Naive thymus-derived CD4-positive, alpha-beta T cell (primary cell): ENCODE measurements at regions of chr20 and their contacts with region 1.

Region 1: DNA sequence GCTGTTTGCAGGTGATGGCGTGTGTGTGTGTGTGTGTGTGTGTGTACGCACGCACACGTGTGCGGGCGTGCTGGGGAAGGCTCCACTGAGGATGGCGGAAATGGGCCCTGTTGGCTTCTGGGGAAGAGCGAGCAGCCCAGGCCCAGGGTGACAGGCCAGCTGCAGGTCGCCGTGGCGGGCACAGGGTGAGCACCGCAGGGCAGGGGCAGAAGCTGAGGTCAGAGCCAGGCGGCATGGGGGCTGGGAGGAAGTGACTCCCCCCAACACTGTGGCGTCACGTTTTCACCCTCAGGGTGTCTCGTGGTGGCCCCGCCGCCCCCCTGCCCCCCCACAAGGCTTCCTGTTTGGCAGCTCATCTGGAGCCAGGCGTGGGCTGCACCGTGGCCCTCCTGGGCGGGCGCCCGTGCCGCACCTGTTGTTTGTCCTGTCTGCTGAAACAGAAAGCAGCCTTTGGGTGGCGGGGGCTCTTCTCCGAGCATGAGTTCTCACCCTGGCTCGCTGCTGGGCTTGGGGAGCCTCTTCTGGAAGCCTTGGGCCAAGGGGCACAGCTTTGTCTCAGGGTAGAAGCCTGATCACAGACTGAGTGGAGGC is 7.1 kb downstream of the RBM38 start:
- DNase-seq: peak; percentile 67 to 94 (median 93)
- ATAC-seq: peak; percentile 87
- H3K4me3 ChIP-seq: peak overlapping the region; percentile 68
- H3K4me3 Mint-ChIP-seq: peak overlapping the region; percentile 82 to 96 (median 86)
- H3K27ac ChIP-seq: peak overlapping the region; percentile 83
- H3K27ac Mint-ChIP-seq: peak overlapping the region; percentile 92 to 100 (median 99)
- H3K4me1 ChIP-seq: peaks cover 90 to 98% of the 10 kb centered on the region in 2 donors
- H3K4me1 Mint-ChIP-seq: peaks cover 64 to 98% (median 94%) of the 10 kb centered on the region in 7 donors
- H3K27me3 ChIP-seq: no peaks in the 10 kb centered on the region
- H3K27me3 Mint-ChIP-seq: no peaks in the 10 kb centered on the region

Region 2: DNA sequence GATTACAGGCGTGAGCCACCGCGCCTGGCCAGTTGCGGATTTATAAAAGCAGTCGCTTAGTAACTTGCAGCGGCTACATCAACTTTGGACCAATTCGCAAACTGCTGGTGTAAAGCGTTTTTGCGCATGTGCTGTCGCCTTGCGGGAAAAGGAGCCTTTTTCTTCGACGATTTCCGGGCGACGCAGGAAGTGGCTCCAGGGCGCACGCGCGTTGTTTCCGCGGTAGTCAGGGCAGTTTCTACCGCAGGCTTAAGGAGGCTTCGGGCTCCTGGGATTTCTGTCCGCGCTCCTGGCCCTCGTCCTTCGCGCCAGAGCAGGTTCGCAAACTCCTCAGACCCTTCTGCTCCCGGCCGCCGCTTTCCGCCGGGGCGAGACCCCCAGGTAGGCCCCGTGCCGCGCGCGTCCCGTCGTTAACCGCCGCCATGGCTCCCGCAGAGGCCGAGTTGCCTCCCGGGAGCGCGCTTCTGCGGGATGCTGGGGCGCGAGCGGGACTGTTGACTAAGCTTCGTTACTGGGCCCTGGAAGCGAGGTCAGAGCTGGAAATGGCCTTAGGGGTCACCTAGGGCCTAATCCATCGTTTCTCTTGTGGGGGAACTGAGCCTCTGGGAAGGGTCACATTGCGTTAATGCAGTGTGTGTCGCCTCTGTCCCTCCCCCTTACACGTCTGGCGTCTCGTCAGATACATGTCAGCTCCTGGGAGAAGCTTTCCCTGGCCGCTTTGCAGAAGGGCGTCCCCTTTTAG is 47.1 kb before region 1 on chr20 and contains the start of gene RAE1:
- CTCF ChIA-PET with region 1: no interaction called
- POLR2A ChIA-PET with region 1: interaction called, 3 read pairs
- intact Hi-C with region 1: loop called (anchors 1 kb)
- DNase-seq: peak; percentile 81 to 92 (median 89)
- ATAC-seq: peak; percentile 88
- H3K4me3 ChIP-seq: peak within 1 kb of the TSS; percentile 81
- H3K4me3 Mint-ChIP-seq: peak within 1 kb of the TSS; percentile 89 to 97 (median 92)
- H3K27ac ChIP-seq: peak within 1 kb of the TSS; percentile 90
- H3K27ac Mint-ChIP-seq: peak within 1 kb of the TSS; percentile 81 to 93 (median 90)
- H3K4me1 ChIP-seq: peaks cover 0 to 19% of the 10 kb centered on the region in 2 donors
- H3K4me1 Mint-ChIP-seq: peaks cover 14 to 46% (median 29%) of the 10 kb centered on the region in 7 donors
- H3K27me3 ChIP-seq: no peaks in the 10 kb centered on the region
- H3K27me3 Mint-ChIP-seq: peaks cover 0 to 14% (median 0%) of the 10 kb centered on the region in 5 donors
- total RNA-seq, gene RAE1: 31.0 to 41.3 (median 35.2) TPM

Region 3: DNA sequence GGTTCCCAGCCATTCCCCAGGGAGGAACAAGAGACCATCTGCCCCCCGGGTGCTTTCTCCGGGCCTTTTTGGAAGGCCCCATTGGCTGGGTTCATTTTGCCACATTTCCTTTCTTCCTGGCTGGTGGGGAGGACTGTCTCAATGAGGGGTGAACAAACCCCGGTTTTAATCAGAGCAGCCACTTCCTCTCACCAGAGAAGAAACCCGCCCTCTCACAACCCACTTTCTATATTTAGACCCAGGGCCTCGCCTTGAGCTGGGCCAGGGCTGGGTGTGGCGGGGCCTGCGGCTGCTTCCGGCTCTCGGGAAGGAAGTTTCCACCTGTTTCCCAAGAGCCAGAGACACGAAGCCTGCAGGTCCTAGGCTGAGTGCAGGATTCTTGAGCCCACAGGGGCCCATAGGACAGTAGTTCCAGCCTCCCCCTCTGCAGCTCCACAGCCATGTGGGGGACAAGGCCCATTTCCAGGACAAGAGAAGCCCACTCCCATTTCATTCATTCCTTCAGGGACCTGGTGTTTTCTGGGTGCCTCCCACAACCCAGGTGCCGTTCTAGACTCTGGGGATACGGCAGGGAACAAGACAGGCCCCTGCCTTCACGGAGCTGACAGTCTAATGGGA is 34.7 kb after region 1 on chr20:
- CTCF ChIA-PET with region 1: interaction called, 44 read pairs
- POLR2A ChIA-PET with region 1: interaction called, 120 read pairs
- intact Hi-C with region 1: loop called (anchors 1 kb)
- DNase-seq: peak in 8 of 9 donors; percentile 63 to 81 (median 76)
- ATAC-seq: peak; percentile 83
- H3K4me3 ChIP-seq: peak overlapping the region; percentile 34
- H3K4me3 Mint-ChIP-seq: peak overlapping the region; percentile 55 to 94 (median 78)
- H3K27ac ChIP-seq: peak overlapping the region; percentile 59
- H3K27ac Mint-ChIP-seq: peak overlapping the region; percentile 60 to 95 (median 90)
- H3K4me1 ChIP-seq: peaks cover 45 to 55% of the 10 kb centered on the region in 2 donors
- H3K4me1 Mint-ChIP-seq: peaks cover 49 to 77% (median 67%) of the 10 kb centered on the region in 7 donors
- H3K27me3 ChIP-seq: no peaks in the 10 kb centered on the region
- H3K27me3 Mint-ChIP-seq: peaks cover 0 to 7% (median 0%) of the 10 kb centered on the region in 5 donors

Region 4: GRCh38 chr20:57498425-57499400 is 100.4 kb after region 1 on chr20:
- CTCF ChIA-PET with region 1: interaction called, 6 read pairs
- POLR2A ChIA-PET with region 1: interaction called, 8 read pairs
- intact Hi-C with region 1: loop called in 1 of 2 experiments (anchors 1 kb)
- DNase-seq: peak in 5 of 9 donors; percentile 19 to 43 (median 24)
- ATAC-seq: peak; percentile 78
- H3K4me3 ChIP-seq: no peak overlapping the region
- H3K4me3 Mint-ChIP-seq: peak overlapping the region in 5 of 10 donors; percentile 3 to 33 (median 20)
- H3K27ac ChIP-seq: no peak overlapping the region
- H3K27ac Mint-ChIP-seq: peak overlapping the region in 2 of 9 donors; percentile 55 to 60
- H3K4me1 ChIP-seq: peaks cover 6 to 11% of the 10 kb centered on the region in 2 donors
- H3K4me1 Mint-ChIP-seq: peaks cover 12 to 15% (median 13%) of the 10 kb centered on the region in 7 donors
- H3K27me3 ChIP-seq: peaks cover 0 to 5% of the 10 kb centered on the region in 2 donors
- H3K27me3 Mint-ChIP-seq: peaks cover 11 to 72% (median 30%) of the 10 kb centered on the region in 5 donors

Region 5: DNA sequence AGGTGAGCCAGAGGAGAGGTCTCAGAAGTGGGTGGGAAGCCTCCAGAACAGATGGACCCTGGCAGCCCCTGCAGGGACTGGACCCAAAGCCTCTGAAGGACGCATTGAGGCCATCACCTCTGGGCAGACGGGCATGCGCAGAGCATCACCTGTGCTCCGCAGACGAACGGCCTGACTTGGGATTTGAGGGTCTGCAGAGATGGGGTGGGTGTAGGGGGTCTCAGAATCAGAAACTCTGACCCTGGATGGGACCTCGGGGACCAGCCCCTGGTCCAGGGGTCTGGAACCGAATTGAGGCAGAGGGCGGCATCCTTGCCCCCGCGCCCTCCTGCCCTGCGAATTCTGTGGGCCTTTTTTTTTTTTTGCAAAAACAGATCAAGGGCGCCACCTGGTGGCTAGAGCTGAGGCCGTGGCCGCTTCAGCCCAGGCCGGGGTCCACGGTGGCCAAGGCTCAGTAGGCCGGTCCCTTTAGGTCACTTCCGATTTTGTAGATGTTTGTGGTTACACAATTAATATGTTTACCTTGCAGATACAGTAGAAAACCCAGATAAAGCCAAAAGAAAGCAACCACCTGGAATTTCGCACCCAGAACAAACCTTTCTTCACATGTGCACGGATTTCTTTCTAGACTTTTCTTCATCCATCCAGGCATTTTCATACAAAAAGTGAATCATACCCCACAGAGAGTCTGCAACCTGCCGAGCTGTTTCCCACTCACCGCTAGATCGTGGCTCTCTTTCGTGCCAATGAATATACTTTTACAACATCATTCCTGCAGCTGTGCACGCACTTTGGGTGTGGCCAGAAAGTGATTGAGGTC is 196.0 kb after region 1 on chr20:
- CTCF ChIA-PET with region 1: no interaction called
- POLR2A ChIA-PET with region 1: no interaction called
- intact Hi-C with region 1: no loop called
- DNase-seq: peak in 8 of 9 donors; percentile 27 to 69 (median 46)
- ATAC-seq: peak; percentile 47
- H3K4me3 ChIP-seq: no peak overlapping the region
- H3K4me3 Mint-ChIP-seq: no peak overlapping the region
- H3K27ac ChIP-seq: no peak overlapping the region
- H3K27ac Mint-ChIP-seq: peak overlapping the region in 3 of 9 donors; percentile 34 to 66 (median 46)
- H3K4me1 ChIP-seq: peaks cover 3 to 4% of the 10 kb centered on the region in 2 donors
- H3K4me1 Mint-ChIP-seq: peaks cover 0 to 7% (median 4%) of the 10 kb centered on the region in 7 donors
- H3K27me3 ChIP-seq: no peaks in the 10 kb centered on the region
- H3K27me3 Mint-ChIP-seq: peaks cover 0 to 24% (median 0%) of the 10 kb centered on the region in 5 donors

Region 6: DNA sequence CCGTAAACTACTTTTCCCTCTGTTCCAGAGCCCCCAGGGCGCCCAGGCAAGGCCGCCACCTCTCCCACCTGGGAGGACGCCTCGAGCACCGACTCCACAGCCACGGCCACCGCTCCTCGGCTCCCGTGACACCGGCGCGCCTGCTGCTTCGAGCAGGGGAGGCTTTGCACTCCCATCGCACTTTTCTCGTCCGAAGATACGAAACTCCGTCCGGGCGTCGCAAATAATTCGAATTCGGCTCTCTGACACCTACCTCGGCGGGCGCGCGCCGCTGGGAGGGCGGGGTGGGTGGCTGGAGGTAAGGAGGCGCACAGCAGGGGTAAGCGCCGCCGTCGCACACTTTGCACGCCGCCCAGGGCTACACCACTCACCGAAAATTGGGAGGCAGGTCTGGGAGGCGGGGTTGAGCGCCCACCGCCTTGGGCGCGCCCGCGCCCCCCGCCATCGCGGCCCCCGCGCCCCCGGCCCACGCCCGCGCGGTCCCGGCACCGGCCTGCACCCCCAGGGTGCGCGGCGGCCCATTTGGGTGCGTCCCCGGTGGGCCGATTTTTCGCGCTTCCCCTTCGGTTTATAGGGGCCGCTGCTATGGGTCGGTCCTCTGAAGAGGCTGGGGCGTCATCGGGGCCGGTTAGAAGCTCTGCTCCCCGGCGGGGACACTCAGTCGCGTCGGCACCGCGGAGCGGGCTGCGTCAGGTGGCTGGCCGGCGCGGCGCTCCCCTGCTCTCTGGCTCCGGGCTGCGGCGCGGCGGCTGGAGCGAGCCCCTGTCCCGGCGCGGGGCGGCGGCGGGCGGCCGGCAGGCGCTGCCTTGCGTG is 1490.4 kb after region 1 on chr20:
- CTCF ChIA-PET with region 1: no interaction called
- POLR2A ChIA-PET with region 1: no interaction called
- intact Hi-C with region 1: loop called in 1 of 2 experiments (anchors 5 kb)
- DNase-seq: peak; percentile 64 to 91 (median 86)
- ATAC-seq: peak; percentile 76
- H3K4me3 ChIP-seq: peak overlapping the region; percentile 68
- H3K4me3 Mint-ChIP-seq: peak overlapping the region; percentile 81 to 94 (median 87)
- H3K27ac ChIP-seq: peak overlapping the region; percentile 95
- H3K27ac Mint-ChIP-seq: peak overlapping the region; percentile 67 to 97 (median 90)
- H3K4me1 ChIP-seq: peaks cover 4 to 6% of the 10 kb centered on the region in 2 donors
- H3K4me1 Mint-ChIP-seq: peaks cover 15 to 46% (median 37%) of the 10 kb centered on the region in 7 donors
- H3K27me3 ChIP-seq: no peaks in the 10 kb centered on the region
- H3K27me3 Mint-ChIP-seq: peaks cover 0 to 3% (median 0%) of the 10 kb centered on the region in 5 donors